ENCODE measurements at regions of chr3 and their contacts with region 1.

Region 1: GRCh38 chr3:27681245-27681748 is 40.8 kb downstream of the EOMES start:
- DNase-seq: peak; percentile 79
- H3K4me3 ChIP-seq: peak overlapping the region in 1 of 3 experiments; percentile 12
- H3K27ac ChIP-seq: peak overlapping the region; percentile 20
- H3K4me1 ChIP-seq: peaks cover 3% of the 10 kb centered on the region
- H3K27me3 ChIP-seq: no peaks in the 10 kb centered on the region
- CTCF ChIP-seq: peak; percentile 50 to 55
- POLR2A ChIP-seq: no peak

Region 2: GRCh38 chr3:27312044-27312668 is 369.1 kb before region 1 on chr3:
- CTCF ChIA-PET with region 1: interaction called, 8 read pairs
- POLR2A ChIA-PET with region 1: no interaction called
- dilution Hi-C with region 1: no loop called
- intact Hi-C with region 1: loop called (anchors 1 kb)
- DNase-seq: peak; percentile 79
- H3K4me3 ChIP-seq: no peak overlapping the region
- H3K27ac ChIP-seq: no peak overlapping the region
- H3K4me1 ChIP-seq: peaks cover 9% of the 10 kb centered on the region
- H3K27me3 ChIP-seq: no peaks in the 10 kb centered on the region
- CTCF ChIP-seq: peak; percentile 57 to 68
- POLR2A ChIP-seq: no peak

Region 3: GRCh38 chr3:27454914-27455313 is 226.4 kb before region 1 on chr3:
- CTCF ChIA-PET with region 1: interaction called, 10 read pairs
- POLR2A ChIA-PET with region 1: no interaction called
- dilution Hi-C with region 1: no loop called
- intact Hi-C with region 1: no loop called
- DNase-seq: peak; percentile 53
- H3K4me3 ChIP-seq: no peak overlapping the region
- H3K27ac ChIP-seq: no peak overlapping the region
- H3K4me1 ChIP-seq: no peaks in the 10 kb centered on the region
- H3K27me3 ChIP-seq: no peaks in the 10 kb centered on the region
- CTCF ChIP-seq: no peak
- POLR2A ChIP-seq: no peak

Region 4: GRCh38 chr3:27533718-27534573 is 147.4 kb before region 1 on chr3:
- CTCF ChIA-PET with region 1: interaction called, 18 read pairs
- POLR2A ChIA-PET with region 1: no interaction called
- dilution Hi-C with region 1: no loop called
- intact Hi-C with region 1: loop called (anchors 1 kb)
- DNase-seq: peak; percentile 97
- H3K4me3 ChIP-seq: no peak overlapping the region
- H3K27ac ChIP-seq: peak overlapping the region; percentile 86
- H3K4me1 ChIP-seq: peaks cover 34% of the 10 kb centered on the region
- H3K27me3 ChIP-seq: no peaks in the 10 kb centered on the region
- CTCF ChIP-seq: peak; percentile 39 to 45
- POLR2A ChIP-seq: no peak

Region 5: GRCh38 chr3:27590437-27591298 is 90.6 kb before region 1 on chr3:
- CTCF ChIA-PET with region 1: interaction called, 57 read pairs
- POLR2A ChIA-PET with region 1: interaction called, 4 read pairs
- dilution Hi-C with region 1: no loop called
- intact Hi-C with region 1: loop called (anchors 1 kb)
- DNase-seq: peak; percentile 95
- H3K4me3 ChIP-seq: peak overlapping the region in 1 of 3 experiments; percentile 20
- H3K27ac ChIP-seq: peak overlapping the region; percentile 98
- H3K4me1 ChIP-seq: peaks cover 30% of the 10 kb centered on the region
- H3K27me3 ChIP-seq: no peaks in the 10 kb centered on the region
- CTCF ChIP-seq: no peak
- POLR2A ChIP-seq: peak; percentile 86

Region 6: GRCh38 chr3:27632431-27633223 is 48.7 kb before region 1 on chr3:
- CTCF ChIA-PET with region 1: interaction called, 10 read pairs
- POLR2A ChIA-PET with region 1: no interaction called
- dilution Hi-C with region 1: no loop called
- intact Hi-C with region 1: loop called (anchors 2 kb)
- DNase-seq: peak; percentile 66
- H3K4me3 ChIP-seq: peak overlapping the region; percentile 32 to 59 (median 42)
- H3K27ac ChIP-seq: peak overlapping the region; percentile 80
- H3K4me1 ChIP-seq: peaks cover 34% of the 10 kb centered on the region
- H3K27me3 ChIP-seq: no peaks in the 10 kb centered on the region
- CTCF ChIP-seq: no peak
- POLR2A ChIP-seq: no peak

Region 7: DNA sequence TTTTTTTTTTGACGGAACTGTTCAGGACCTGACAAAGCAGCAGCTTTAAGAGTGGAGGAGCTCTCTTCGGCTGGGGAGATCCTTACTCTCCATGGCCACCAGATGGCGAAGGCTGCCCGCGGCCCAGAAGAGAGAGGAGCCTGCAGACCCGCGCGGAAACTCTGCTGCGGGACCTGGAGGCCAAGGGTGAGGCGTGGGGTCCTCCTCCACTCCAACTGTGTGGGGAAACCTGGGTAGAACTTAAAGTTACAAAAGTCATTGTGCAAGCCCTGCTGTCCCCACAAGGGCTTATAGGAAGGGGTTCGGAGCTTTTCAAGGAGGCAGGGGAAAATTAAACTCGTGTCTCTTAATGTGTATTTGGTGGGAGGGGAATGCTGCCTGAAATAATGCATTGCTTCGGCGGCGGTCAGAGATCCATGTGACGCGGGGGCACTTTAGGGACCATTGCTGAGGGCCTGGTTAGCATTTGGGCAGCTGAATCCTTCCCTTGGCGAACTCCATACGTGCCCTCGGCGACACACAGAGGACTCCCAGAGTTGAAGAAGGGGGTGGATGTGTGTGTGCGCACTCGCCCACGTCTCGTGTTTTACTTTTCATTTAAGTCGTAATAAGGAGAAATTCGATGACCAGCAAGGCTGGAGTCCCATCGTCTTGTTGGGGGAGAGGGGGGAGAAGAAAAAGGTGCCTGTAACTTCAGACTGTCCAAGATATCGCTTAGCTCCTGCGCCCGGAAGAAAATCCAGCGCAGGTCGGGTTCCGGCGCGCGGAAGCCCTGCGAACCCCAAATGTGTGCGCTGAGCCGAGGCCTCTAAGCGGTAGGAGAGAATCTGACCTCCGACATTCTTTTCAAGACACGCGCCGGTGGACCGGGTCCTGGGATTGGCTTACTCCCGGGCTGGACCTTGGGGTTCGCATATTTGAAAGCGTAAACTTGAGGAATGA is 31.1 kb after region 1 on chr3:
- CTCF ChIA-PET with region 1: interaction called, 15 read pairs
- POLR2A ChIA-PET with region 1: no interaction called
- dilution Hi-C with region 1: no loop called
- intact Hi-C with region 1: no loop called
- DNase-seq: peak; percentile 79
- H3K4me3 ChIP-seq: peak overlapping the region; percentile 27 to 50 (median 36)
- H3K27ac ChIP-seq: no peak overlapping the region
- H3K4me1 ChIP-seq: peaks cover 23% of the 10 kb centered on the region
- H3K27me3 ChIP-seq: peaks cover 67 to 76% of the 10 kb centered on the region in 2 experiments
- CTCF ChIP-seq: peak; percentile 68 to 90
- POLR2A ChIP-seq: no peak

Region 8: GRCh38 chr3:28033059-28033784 is 351.9 kb after region 1 on chr3:
- CTCF ChIA-PET with region 1: no interaction called
- POLR2A ChIA-PET with region 1: no interaction called
- dilution Hi-C with region 1: no loop called
- intact Hi-C with region 1: no loop called
- DNase-seq: no peak
- H3K4me3 ChIP-seq: no peak overlapping the region
- H3K27ac ChIP-seq: no peak overlapping the region
- H3K4me1 ChIP-seq: no peaks in the 10 kb centered on the region
- H3K27me3 ChIP-seq: no peaks in the 10 kb centered on the region
- CTCF ChIP-seq: no peak
- POLR2A ChIP-seq: no peak

Region 9: DNA sequence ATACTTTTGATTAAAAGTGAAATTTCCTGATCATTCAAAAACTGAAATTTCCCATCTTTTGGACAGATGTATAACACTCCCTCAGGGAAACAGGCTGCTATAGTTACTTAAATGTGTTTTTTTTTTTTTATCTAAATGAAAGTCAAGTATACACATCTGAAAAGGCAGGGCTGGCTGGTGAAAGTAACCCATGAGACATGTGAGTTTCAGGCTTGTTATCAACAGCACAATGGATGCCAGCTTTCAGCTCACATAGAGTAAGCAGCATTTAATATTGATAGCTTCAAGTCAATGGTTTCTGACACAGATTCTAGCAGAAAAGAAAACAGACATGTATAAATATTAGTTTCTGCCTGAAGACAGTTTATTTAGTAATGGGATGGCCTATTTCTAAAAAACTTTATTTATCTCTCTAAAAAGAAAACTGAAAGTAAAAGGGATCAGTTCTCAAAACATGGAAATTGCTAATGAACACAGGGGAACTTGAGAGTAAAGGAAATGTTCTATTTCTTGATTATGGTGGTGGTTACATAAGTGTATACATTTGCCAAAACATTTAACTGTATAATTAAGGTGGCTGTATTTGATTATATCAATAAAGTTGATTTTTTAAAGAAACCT is 470.4 kb after region 1 on chr3:
- CTCF ChIA-PET with region 1: no interaction called
- POLR2A ChIA-PET with region 1: no interaction called
- dilution Hi-C with region 1: no loop called
- intact Hi-C with region 1: no loop called
- DNase-seq: no peak
- H3K4me3 ChIP-seq: no peak overlapping the region
- H3K27ac ChIP-seq: no peak overlapping the region
- H3K4me1 ChIP-seq: no peaks in the 10 kb centered on the region
- H3K27me3 ChIP-seq: no peaks in the 10 kb centered on the region
- CTCF ChIP-seq: no peak
- POLR2A ChIP-seq: no peak